ENCODE measurements at regions of chr6 and their contacts with region 1.

Region 1: GRCh38 chr6:43103253-43103881 is 27.3 kb downstream of the PTK7 start:
- DNase-seq: no peak
- ATAC-seq: no peak

Region 2: DNA sequence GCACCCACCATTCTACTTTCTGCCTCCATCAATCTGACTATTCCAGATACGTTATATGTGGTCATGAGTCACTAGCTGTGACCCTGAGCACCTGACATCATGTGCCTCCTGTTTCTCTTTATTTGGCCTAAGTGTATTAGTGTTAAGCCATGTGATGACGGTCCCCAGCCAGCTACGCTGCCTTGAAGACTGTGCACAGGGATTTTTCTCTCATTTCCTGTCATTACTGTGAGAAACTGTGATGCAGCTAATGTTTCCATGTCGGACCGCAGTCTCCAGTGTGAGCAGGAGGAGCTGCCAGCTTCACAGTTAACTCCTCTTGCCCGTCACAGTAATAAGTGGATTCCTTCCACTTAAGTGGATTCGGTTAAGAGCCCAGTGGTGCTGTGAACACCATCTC is 1229.2 kb after region 1 on chr6:
- intact Hi-C with region 1: loop called (anchors 5 kb)
- DNase-seq: no peak
- ATAC-seq: no peak

Measured in sciatic nerve (tissue), 2 donors.